Adrenal gland (tissue), 19 donors: ENCODE measurements at regions of chr18 and their contacts with region 1.

Region 1: DNA sequence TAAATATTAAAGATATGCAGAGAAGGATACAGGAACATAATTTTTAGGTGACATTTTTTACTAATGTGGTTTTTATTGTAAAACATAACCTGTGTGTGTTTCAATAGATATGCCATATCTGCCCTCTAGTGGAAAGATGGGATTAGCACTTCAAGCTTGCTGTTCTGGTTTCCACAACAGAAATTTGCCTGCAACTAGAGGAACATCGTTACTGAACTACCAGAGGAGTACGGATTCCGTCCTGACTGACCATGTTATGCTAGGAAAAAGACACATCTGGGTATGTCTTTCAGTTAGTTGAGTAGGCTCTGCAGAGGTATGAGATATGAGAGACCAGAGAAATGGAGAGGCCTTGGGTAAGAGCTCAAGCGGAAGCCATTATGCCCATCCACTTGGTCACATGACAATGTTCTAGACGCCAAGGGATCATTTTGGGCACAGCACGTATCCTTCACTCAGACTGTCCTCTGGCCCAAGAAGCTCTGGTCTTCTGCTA is 104.9 kb downstream of the MBD2 start:
- DNase-seq: peak in 5 of 7 donors; percentile 10 to 35 (median 27)
- H3K4me3 ChIP-seq: no peak overlapping the region
- H3K27ac ChIP-seq: no peak overlapping the region
- H3K4me1 ChIP-seq: no peaks in the 10 kb centered on the region
- H3K27me3 ChIP-seq: peaks cover 3% of the 10 kb centered on the region
- CTCF ChIP-seq: peak; percentile 57 to 82 (median 68)
- POLR2A ChIP-seq: no peak

Region 2: DNA sequence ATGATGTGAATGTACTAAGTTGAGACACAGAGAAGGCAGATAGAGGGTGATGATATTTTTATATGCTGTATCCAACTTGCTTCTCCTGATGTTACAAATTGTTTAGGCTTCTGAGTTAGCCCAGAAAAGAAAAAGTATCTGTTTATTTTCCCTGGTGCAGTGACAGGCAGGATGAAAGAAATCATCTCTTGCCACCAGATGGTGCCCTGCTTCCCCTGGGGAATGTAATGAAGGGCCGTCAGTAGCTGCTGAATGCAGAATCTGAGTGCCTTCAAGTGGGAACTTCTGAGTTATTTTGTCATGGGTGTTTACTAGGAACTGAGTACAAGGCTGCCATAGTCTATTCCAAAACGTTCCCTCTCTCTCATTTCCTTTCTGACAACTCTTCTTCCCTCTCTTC is 420.7 kb before region 1 on chr18:
- intact Hi-C with region 1: loop called in 1 of 2 experiments (anchors 10 kb)
- DNase-seq: peak in 5 of 7 donors; percentile 9 to 58 (median 30)
- H3K4me3 ChIP-seq: no peak overlapping the region
- H3K27ac ChIP-seq: no peak overlapping the region
- H3K4me1 ChIP-seq: no peaks in the 10 kb centered on the region
- H3K27me3 ChIP-seq: no peaks in the 10 kb centered on the region
- CTCF ChIP-seq: peak in 4 of 6 experiments; percentile 16 to 47 (median 38)
- POLR2A ChIP-seq: no peak

Region 3: DNA sequence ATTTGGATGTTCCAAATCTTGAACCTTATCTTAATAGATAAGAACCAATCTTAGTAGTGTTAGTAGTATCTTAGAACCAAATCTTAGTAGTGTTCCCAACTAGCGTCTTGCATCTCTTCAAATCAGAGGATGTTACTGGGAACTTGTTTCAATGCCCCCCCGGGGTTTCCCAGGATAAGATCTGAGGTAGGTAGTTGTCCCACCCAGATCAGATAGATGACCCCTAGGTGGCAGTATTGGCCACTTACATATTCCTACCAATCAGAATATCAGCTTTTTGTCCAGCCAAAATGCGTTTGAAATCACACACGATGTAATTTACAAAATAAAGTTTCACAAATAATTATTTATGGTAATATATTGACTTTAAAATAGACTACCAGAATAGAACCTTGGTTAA is 209.9 kb before region 1 on chr18:
- intact Hi-C with region 1: loop called in 1 of 2 experiments (anchors 10 kb)
- DNase-seq: peak in 2 of 7 donors; percentile 8 to 28
- H3K4me3 ChIP-seq: no peak overlapping the region
- H3K27ac ChIP-seq: no peak overlapping the region
- H3K4me1 ChIP-seq: no peaks in the 10 kb centered on the region
- H3K27me3 ChIP-seq: no peaks in the 10 kb centered on the region
- CTCF ChIP-seq: peak in 3 of 6 experiments; percentile 27 to 40 (median 30)
- POLR2A ChIP-seq: no peak